ENCODE measurements at regions of chr19 and their contacts with region 1.

Region 1: DNA sequence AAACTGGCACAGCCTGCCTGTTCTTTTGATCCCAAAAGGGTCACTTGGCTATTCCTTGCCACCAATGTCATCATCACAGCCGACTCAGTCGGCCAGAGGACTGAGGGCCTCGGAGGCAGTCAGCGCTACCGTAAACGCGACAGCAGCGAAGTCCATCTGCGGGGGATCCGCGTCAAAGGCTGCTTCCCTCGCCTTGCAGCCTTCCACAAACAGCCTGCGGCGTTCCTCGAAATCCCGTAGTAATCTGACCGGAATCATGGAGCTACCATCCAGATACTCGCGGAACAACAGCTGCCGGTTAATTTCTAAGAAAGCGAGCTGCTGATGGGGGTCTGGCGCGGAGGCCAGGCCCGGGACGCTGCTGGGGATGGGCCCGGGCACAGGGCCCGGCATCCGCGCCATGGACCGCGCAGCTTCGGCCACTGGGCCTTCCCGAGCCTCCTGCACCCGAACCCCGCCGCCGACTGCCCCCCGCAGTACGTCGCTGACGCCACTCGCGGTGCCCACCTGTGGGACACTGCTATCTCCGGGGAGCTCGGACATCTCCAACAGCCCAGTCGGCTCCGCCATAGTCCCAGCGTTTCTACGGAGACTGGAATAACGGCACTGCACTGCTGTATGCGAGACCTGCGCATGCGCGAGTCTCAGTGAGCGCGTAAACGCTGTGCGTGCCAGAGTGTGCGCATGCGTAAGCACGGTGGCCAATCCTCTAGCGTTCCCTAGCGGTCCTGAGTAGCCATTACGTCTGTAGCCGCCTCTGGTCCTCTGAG is at the start of gene EID2B:
- DNase-seq: peak; percentile 56
- H3K4me3 ChIP-seq: peak within 1 kb of the TSS; percentile 83
- CTCF ChIP-seq: peak; percentile 97

Region 2: DNA sequence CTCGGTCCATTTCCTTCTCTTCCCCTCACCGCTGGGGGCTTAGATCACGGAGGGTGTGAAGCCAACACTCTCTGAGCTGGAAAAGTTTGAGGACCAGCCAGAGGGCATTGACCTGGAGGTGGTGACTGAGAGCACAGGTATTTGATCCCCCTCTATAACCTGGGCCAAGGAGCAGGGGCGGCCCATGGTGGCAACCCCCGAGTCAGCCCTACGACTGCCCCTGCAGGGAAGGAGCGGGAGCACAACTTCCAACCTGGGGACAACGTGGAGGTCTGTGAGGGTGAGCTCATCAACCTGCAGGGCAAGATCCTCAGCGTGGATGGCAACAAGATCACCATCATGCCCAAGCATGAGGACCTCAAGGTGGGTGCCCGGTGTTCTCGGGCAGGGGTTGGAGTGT is 63.4 kb before region 1 on chr19:
- CTCF ChIA-PET with region 1: interaction called, 66 read pairs
- POLR2A ChIA-PET with region 1: no interaction called
- DNase-seq: no peak
- H3K4me3 ChIP-seq: no peak overlapping the region
- CTCF ChIP-seq: no peak

Region 3: DNA sequence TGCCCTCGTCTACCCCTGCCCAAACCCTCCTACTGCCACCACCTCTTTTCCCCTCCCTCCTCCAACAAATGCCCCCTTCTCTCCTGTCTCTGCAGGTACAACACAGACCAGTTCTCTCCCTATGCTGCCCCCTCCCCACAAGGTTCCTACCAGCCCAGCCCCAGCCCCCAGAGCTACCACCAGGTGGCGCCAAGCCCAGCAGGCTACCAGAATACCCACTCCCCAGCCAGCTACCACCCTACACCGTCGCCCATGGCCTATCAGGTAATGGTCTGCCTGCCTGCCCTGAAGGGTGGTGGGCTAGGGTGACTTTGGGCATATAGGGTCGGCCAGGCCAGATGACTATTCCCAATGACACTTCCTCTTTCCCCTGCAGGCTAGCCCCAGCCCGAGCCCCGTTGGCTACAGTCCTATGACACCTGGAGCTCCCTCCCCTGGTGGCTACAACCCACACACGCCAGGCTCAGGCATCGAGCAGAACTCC is 58.2 kb before region 1 on chr19:
- CTCF ChIA-PET with region 1: interaction called, 66 read pairs
- POLR2A ChIA-PET with region 1: no interaction called
- DNase-seq: no peak
- H3K4me3 ChIP-seq: no peak overlapping the region
- CTCF ChIP-seq: peak; percentile 88

Region 4: GRCh38 chr19:39480337-39481228 is 51.8 kb before region 1 on chr19 and contains the start of gene TIMM50:
- CTCF ChIA-PET with region 1: interaction called, 66 read pairs
- POLR2A ChIA-PET with region 1: interaction called, 3 read pairs
- DNase-seq: peak; percentile 34
- H3K4me3 ChIP-seq: peak within 1 kb of the TSS; percentile 99
- CTCF ChIP-seq: no peak

Region 5: GRCh38 chr19:39502640-39503417 is 29.6 kb before region 1 on chr19:
- CTCF ChIA-PET with region 1: interaction called, 45 read pairs
- POLR2A ChIA-PET with region 1: interaction called, 3 read pairs
- DNase-seq: no peak
- H3K4me3 ChIP-seq: no peak overlapping the region
- CTCF ChIP-seq: peak; percentile 72

Region 6: DNA sequence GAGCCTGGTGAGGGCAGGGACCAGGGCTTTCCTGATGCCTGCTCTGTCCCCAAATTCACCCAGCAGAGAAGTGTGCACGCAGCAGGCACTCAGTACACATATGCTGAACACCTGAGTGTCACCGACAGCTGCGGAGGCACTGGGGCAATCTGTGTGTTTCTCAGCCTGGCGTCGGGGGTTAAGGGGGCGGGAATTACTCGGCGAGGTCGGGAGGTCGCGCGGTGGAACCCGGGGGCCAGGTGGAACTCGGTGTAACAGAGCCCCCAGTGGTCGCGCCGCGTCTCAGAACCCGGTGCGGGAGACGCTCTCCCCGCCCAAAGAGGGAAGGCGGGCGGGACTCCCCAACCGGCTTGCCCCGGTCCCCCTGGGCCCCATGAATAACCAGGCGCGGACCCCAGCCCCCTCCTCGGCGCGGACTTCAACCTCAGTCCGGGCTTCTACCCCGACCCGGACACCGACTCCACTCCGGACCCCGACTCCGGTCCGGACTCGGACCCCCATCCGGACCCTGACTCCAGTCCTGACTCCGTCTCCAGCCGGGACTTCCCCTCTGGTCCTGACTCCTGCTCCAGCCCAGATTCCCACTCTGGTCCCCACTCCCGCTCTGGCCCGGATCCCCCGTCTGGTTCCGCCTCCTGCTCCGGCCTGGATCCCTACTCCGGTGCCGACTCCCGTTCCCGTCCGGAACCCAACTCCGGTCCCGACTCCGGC is 17.4 kb before region 1 on chr19 and contains the start of gene SELENOV:
- CTCF ChIA-PET with region 1: interaction called, 28 read pairs
- POLR2A ChIA-PET with region 1: interaction called, 3 read pairs
- DNase-seq: no peak
- H3K4me3 ChIP-seq: no peak within 1 kb of the TSS; the same call in none of the 2 replicates
- CTCF ChIP-seq: no peak

Measured in AG04449 (cell line).